ENCODE measurements at regions of chr13 and their contacts with region 1.

Region 1: DNA sequence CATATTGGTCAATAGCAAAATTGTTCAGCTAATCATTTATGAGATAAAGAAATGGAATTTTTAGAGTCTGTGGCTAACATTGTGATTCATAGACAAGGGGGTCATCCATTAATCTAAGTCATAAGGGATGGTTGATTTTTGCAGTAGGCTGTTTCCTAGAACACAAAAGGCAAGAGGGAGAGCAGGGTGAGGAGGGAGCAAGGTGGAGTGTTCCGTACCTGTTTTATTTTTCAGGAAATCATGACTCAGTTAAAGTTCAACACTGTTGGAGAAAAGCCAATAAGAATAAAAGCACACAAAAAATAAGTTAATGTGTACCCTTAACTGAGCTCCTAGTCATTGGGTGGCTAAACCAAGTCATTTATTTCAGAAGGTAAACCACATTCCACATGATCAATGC is 512.4 kb upstream of the ATXN8OS start:
- DNase-seq: no peak
- H3K4me3 Mint-ChIP-seq: no peak overlapping the region
- H3K27ac Mint-ChIP-seq: no peak overlapping the region
- H3K4me1 Mint-ChIP-seq: no peaks in the 10 kb centered on the region
- H3K27me3 Mint-ChIP-seq: no peaks in the 10 kb centered on the region

Region 2: GRCh38 chr13:69579351-69579750 is 15.8 kb before region 1 on chr13:
- intact Hi-C with region 1: loop called (anchors 1 kb)
- DNase-seq: no peak
- H3K4me3 Mint-ChIP-seq: no peak overlapping the region
- H3K27ac Mint-ChIP-seq: no peak overlapping the region
- H3K4me1 Mint-ChIP-seq: no peaks in the 10 kb centered on the region
- H3K27me3 Mint-ChIP-seq: no peaks in the 10 kb centered on the region

Region 3: GRCh38 chr13:69720278-69720983 is 125.2 kb after region 1 on chr13:
- intact Hi-C with region 1: no loop called
- DNase-seq: no peak
- H3K4me3 Mint-ChIP-seq: no peak overlapping the region
- H3K27ac Mint-ChIP-seq: no peak overlapping the region
- H3K4me1 Mint-ChIP-seq: no peaks in the 10 kb centered on the region
- H3K27me3 Mint-ChIP-seq: no peaks in the 10 kb centered on the region

Region 4: DNA sequence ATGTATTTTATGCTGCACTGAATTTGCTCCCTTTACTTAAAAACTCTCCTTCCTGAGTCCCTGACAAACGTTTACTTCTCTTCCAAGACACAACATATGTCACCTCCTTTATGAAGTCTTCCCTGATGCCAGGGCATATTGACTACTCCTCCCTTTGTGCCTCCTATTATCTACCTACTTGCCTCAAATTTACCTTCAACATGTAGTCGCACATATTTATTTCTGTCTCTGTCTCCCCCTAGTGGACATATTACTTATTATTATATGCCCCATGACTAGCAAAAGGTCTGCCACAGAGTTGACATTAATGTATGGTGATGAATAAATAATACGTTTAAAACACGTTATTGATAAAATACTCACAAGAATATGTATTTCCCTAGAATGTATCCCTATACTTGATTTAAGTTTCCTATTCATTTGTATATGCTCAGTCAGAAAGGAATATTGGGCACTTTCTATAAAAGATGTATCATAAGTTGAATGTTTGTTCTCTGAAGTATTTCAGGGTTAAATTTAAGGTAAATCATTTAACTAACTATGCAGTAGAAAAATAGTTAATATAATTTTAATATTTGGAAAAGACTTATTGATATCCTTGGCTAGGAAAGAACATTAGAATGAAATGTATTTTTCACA is 262.1 kb after region 1 on chr13:
- intact Hi-C with region 1: no loop called
- DNase-seq: no peak
- H3K4me3 Mint-ChIP-seq: no peak overlapping the region
- H3K27ac Mint-ChIP-seq: no peak overlapping the region
- H3K4me1 Mint-ChIP-seq: no peaks in the 10 kb centered on the region
- H3K27me3 Mint-ChIP-seq: no peaks in the 10 kb centered on the region

Region 5: DNA sequence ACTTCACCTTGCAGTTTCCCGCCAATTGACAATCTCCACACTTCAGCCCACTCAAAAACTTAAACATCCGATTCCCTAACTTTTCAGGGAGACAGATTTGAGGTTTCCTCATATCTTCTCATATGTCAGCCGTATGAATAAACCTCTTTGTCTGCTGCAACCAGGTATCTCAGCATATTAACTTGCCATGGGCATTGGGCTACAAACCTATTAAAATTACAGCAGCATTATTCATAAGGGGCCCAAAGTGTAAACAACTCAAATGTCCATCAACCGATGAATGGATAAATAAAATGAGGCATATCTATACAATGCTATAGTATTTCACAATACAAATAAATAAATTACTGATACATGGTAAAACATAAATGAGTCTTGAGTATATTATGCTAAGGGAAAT is 333.1 kb after region 1 on chr13:
- intact Hi-C with region 1: no loop called
- DNase-seq: no peak
- H3K4me3 Mint-ChIP-seq: no peak overlapping the region
- H3K27ac Mint-ChIP-seq: no peak overlapping the region
- H3K4me1 Mint-ChIP-seq: no peaks in the 10 kb centered on the region
- H3K27me3 Mint-ChIP-seq: no peaks in the 10 kb centered on the region

Measured in activated CD4-positive, alpha-beta T cell treated with anti-CD3 and anti-CD28 coated beads, Interleukin-2, amount 10 ng/mL, durations not matched to agents 24 days and 14 days (primary cell).